Activated CD4-positive, alpha-beta memory T cell treated with anti-CD3 and anti-CD28 coated beads for 36 hours (primary cell): ENCODE measurements at regions of chr1 and their contacts with region 1.

Region 1: DNA sequence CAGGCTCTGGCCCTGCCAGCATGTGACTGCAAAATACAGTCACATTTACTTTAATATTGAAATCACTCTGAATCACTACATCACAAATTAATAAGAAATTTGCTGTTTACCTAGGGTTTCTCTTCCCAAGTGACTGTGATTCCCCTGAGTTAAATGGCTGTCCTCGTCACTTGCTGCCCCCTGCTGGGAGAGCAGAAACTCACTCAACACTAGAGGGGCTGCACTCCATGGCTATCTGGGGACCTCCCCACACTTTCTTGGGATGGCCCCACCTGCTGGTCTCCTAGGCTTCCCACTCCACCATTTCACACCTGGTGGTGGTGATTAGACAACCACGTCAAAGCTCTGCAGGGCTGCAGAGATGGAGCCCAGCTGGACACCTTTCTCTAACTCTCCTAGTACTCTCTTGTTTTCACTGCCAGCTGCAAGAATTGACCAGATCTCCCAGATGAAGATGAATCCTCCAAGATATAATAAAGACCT is 63.4 kb downstream of the CD2 start:
- DNase-seq: peak; percentile 89
- H3K4me3 Mint-ChIP-seq: peak overlapping the region; percentile 60
- H3K27ac Mint-ChIP-seq: peak overlapping the region; percentile 96
- H3K4me1 Mint-ChIP-seq: peaks cover 67% of the 10 kb centered on the region
- H3K27me3 Mint-ChIP-seq: no peaks in the 10 kb centered on the region

Region 2: DNA sequence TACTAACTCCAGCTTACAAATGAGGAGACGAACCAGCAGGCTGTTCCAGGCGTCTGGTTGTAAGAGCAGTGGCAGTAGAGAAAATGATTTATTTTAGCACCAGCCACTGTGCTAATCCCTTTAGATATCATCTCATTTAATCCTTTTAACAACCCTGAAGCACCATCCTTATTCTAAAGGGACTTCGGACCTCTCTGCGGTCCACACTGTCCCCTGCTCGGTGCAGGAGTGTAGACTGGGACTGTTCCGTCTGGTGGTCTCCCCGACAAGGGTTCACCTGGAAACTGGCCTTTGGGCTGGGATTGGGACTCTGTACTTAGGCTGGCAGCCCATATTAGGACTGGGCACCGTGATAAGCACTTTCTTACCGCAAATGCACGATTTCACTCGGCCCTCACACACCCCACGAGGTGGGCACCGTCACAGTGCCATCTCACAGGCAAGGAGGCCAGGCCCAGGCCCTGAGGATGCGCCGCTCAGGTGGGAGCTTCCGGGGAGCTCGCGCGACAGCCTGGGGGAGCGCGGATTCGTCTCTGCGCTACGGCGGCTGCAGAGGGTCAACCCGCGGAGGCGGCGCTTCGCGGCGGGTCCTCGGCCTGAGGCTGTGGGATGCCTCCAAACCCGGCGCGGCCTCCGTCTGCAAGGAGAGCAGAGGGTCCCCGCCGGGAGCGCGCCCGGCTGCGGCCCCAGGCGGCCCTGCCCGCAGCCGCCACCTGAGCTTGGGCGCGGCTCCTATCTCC is 399.4 kb before region 1 on chr1:
- CTCF ChIA-PET with region 1: no interaction called
- POLR2A ChIA-PET with region 1: no interaction called
- intact Hi-C with region 1: loop called (anchors 10 kb)
- DNase-seq: peak; percentile 91
- H3K4me3 Mint-ChIP-seq: peak overlapping the region; percentile 87
- H3K27ac Mint-ChIP-seq: peak overlapping the region; percentile 75
- H3K4me1 Mint-ChIP-seq: peaks cover 32% of the 10 kb centered on the region
- H3K27me3 Mint-ChIP-seq: no peaks in the 10 kb centered on the region

Region 3: DNA sequence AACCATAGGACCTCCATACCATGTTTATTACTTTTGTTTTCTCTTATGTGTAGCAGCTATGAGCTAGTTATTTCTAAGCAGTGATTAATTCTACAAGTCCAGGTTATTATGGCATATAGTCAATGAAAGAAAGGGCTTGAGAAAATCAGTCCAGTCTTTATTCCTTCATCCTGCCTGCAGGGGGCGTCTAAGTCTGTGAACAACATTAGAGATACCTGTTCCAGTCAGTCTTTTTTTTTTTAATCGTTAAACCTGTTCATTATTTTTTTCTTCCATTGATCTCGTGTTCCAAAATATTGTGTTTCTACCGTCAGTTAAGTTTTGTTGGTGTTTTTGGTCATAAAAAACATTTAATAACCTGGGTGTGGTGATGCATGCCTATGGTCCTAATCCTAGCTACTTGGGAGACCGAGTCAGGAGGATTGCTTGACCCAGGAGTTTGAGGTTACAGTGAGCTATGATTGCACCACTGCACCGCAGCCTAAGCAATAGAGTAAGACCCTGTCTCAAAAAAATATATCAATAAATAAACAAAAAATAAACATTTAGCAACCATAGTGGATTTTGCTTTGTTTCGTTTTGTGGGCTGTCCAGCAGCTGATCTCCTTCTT is 92.8 kb before region 1 on chr1:
- CTCF ChIA-PET with region 1: interaction called, 8 read pairs
- POLR2A ChIA-PET with region 1: no interaction called
- intact Hi-C with region 1: loop called (anchors 1 kb)
- DNase-seq: peak; percentile 84
- H3K4me3 Mint-ChIP-seq: no peak overlapping the region
- H3K27ac Mint-ChIP-seq: peak overlapping the region; percentile 64
- H3K4me1 Mint-ChIP-seq: peaks cover 28% of the 10 kb centered on the region
- H3K27me3 Mint-ChIP-seq: no peaks in the 10 kb centered on the region

Region 4: DNA sequence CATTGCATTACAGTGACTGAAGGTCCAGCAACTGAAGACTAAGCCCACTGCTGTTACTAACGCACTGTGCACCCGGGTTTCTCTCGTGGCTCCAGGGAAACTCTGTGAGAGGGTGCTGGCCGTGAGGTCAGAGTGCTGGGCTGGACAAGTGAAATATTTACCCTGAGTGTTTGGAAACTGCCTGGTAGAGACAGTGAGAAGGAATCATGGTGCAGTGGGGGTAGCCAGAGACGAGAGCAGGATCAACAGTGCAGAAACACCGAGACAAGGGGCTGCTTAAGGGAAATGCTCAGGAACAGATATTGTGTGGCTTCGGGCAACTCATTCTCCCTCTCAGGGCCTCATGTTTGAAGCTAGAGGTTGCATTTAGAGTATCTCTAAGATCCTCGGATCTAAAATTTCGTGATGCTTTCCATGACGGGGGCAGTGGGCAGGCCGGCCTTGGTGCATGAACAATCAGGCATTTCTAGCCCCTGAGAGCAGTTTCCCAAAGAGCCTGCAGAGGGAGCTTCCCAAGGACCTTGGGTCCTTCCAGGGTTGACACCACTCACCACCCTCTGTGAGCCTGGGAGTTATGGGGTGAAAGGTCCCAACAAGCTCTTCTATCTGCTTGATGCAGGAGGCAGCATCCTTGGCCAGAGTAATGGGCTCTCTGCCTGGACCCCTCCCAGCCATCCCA is 53.7 kb before region 1 on chr1:
- CTCF ChIA-PET with region 1: interaction called, 78 read pairs
- POLR2A ChIA-PET with region 1: interaction called, 232 read pairs
- intact Hi-C with region 1: loop called (anchors 1 kb)
- DNase-seq: peak; percentile 79
- H3K4me3 Mint-ChIP-seq: peak overlapping the region; percentile 99
- H3K27ac Mint-ChIP-seq: peak overlapping the region; percentile 99
- H3K4me1 Mint-ChIP-seq: peaks cover 88% of the 10 kb centered on the region
- H3K27me3 Mint-ChIP-seq: peaks cover 3% of the 10 kb centered on the region

Region 5: GRCh38 chr1:116794804-116795481 is 22.7 kb before region 1 on chr1:
- CTCF ChIA-PET with region 1: interaction called, 3 read pairs
- POLR2A ChIA-PET with region 1: interaction called, 21 read pairs
- intact Hi-C with region 1: no loop called
- DNase-seq: no peak
- H3K4me3 Mint-ChIP-seq: no peak overlapping the region
- H3K27ac Mint-ChIP-seq: peak overlapping the region; percentile 40
- H3K4me1 Mint-ChIP-seq: peaks cover 66% of the 10 kb centered on the region
- H3K27me3 Mint-ChIP-seq: no peaks in the 10 kb centered on the region